MCF 10A (cell line): ENCODE measurements at regions of chr1 and their contacts with region 1.

Region 1: GRCh38 chr1:227318003-227318852 is at the start of gene CDC42BPA:
- DNase-seq: peak; percentile 96
- H3K4me3 Mint-ChIP-seq: peak within 1 kb of the TSS; percentile 86
- H3K27ac Mint-ChIP-seq: peak within 1 kb of the TSS; percentile 98
- H3K4me1 Mint-ChIP-seq: peaks cover 26% of the 10 kb centered on the region
- H3K27me3 Mint-ChIP-seq: no peaks in the 10 kb centered on the region
- CTCF ChIP-seq: no peak
- total RNA-seq, gene CDC42BPA: 88.8 and 102 TPM in 2 replicates

Region 2: DNA sequence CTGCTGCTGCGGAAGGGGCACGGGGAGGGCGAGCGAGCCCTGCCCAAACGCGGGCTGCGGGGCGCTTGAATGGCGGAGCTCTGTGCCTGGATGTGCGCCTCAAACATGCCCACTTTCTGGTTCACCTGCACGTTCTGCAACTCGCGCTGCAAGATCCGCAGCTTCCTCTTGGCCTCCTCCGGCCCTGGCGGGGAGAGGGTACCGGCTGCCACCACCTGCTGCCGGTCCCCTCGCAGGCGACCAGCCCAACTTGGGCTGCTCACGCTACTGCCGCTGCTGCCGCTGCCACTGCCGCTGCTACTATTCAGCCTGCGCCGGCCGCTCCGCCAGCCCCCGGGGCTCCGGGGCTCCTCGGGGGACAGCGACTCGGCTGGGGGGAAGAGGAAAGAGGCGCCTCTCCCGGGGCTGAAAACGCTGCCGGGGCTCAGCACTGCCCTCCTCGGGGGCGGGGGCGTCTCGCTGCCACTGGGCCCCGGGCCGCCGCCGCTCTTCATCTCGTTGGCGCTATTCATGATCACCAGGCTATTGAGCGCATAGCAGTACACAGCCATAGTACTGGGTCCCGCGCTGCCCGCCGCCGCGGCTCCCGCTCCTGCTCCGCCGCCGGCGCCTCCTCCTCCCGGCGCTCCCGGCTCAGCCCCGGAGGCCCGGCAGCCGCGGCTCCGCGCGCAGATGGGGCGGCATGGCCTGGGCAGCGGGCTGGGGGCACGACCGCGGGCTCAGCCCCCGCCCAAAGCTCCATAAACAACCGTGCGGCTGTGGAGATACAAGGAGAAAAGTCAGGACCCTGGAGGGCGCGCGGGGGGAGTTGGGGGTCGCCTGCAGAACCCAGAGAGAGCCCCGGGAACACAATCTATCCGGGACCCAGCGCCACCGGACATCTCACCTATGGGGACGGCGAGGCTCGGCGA is 581.1 kb before region 1 on chr1:
- CTCF ChIA-PET with region 1: no interaction called
- POLR2A ChIA-PET with region 1: no interaction called
- intact Hi-C with region 1: loop called (anchors 10 kb)
- DNase-seq: no peak
- H3K4me3 Mint-ChIP-seq: peak overlapping the region; percentile 82
- H3K27ac Mint-ChIP-seq: peak overlapping the region; percentile 33
- H3K4me1 Mint-ChIP-seq: peaks cover 28% of the 10 kb centered on the region
- H3K27me3 Mint-ChIP-seq: no peaks in the 10 kb centered on the region
- CTCF ChIP-seq: no peak

Region 3: DNA sequence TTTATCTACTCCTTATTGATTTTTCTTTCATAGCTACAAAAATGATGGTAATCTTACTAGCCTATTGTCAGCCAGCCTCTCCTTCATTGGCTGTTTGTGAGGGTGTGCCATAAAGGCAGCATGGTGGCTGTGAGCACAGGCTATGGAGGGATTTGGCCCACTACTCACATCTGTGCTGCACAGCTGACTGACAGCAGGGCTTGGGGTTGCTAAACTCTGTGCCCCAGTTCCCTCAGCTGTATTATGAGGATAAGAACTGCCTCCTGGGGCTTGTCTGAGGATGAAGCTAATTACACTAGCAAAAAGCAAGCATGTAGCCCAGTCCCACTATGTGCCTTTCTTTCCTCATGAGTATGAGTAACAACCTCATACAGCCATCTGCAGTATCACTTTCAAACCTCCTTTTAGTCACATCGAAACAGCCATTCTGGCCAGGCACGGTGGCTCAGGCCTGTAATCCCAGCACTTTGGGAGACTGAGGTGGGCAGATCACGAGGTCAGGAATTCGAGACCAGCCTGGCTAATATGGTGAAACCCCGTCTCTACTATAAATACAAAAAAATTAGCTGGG is 311.9 kb before region 1 on chr1:
- CTCF ChIA-PET with region 1: no interaction called
- POLR2A ChIA-PET with region 1: no interaction called
- intact Hi-C with region 1: no loop called
- DNase-seq: no peak
- H3K4me3 Mint-ChIP-seq: no peak overlapping the region
- H3K27ac Mint-ChIP-seq: no peak overlapping the region
- H3K4me1 Mint-ChIP-seq: no peaks in the 10 kb centered on the region
- H3K27me3 Mint-ChIP-seq: no peaks in the 10 kb centered on the region
- CTCF ChIP-seq: no peak

Region 4: GRCh38 chr1:227131193-227131592 is 187.0 kb before region 1 on chr1:
- CTCF ChIA-PET with region 1: no interaction called
- POLR2A ChIA-PET with region 1: no interaction called
- intact Hi-C with region 1: loop called (anchors 5 kb)
- DNase-seq: peak; percentile 66
- H3K4me3 Mint-ChIP-seq: no peak overlapping the region
- H3K27ac Mint-ChIP-seq: no peak overlapping the region
- H3K4me1 Mint-ChIP-seq: peaks cover 7% of the 10 kb centered on the region
- H3K27me3 Mint-ChIP-seq: no peaks in the 10 kb centered on the region
- CTCF ChIP-seq: peak; percentile 61

Region 5: DNA sequence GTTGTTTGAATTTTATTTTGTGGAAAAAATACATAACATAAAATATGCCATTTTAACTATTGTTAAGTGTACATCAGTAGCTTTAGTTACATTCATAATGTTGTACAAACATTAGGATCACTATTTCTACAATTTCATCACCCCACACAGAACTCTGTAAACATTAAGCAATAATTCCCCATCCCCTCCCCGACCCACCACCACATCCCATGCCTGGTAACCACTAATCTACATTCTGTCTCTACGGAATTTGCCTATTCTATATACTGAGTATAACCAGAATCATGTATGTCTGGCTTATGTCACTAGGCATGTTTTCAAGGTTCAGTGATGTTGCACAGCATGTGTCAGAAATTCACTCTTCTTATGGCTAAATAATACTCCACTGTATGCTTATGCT is 47.7 kb before region 1 on chr1:
- CTCF ChIA-PET with region 1: interaction called, 3 read pairs
- POLR2A ChIA-PET with region 1: interaction called, 12 read pairs
- intact Hi-C with region 1: no loop called
- DNase-seq: no peak
- H3K4me3 Mint-ChIP-seq: no peak overlapping the region
- H3K27ac Mint-ChIP-seq: no peak overlapping the region
- H3K4me1 Mint-ChIP-seq: peaks cover 26% of the 10 kb centered on the region
- H3K27me3 Mint-ChIP-seq: no peaks in the 10 kb centered on the region
- CTCF ChIP-seq: no peak

Region 6: DNA sequence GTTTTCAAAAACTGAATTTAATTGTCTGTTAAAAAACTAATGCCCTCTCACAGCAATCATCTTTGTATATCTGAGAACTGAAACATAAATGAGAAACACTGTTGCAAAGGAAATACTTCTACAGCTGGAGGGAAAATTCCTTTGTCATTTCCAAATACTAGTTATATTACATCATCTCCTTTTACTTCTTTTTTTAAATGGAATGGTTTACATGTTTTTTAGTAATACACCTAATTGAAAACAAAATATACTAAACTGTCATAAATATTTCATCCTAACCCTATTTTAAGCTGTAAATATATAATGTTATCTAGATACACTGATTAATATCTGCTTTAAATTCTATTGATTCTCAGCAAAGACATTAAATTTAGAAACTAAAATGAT is 19.0 kb before region 1 on chr1:
- CTCF ChIA-PET with region 1: interaction called, 4 read pairs
- POLR2A ChIA-PET with region 1: interaction called, 175 read pairs
- intact Hi-C with region 1: no loop called
- DNase-seq: peak; percentile 55
- H3K4me3 Mint-ChIP-seq: peak overlapping the region; percentile 44
- H3K27ac Mint-ChIP-seq: peak overlapping the region; percentile 70
- H3K4me1 Mint-ChIP-seq: peaks cover 36% of the 10 kb centered on the region
- H3K27me3 Mint-ChIP-seq: no peaks in the 10 kb centered on the region
- CTCF ChIP-seq: no peak

Region 7: DNA sequence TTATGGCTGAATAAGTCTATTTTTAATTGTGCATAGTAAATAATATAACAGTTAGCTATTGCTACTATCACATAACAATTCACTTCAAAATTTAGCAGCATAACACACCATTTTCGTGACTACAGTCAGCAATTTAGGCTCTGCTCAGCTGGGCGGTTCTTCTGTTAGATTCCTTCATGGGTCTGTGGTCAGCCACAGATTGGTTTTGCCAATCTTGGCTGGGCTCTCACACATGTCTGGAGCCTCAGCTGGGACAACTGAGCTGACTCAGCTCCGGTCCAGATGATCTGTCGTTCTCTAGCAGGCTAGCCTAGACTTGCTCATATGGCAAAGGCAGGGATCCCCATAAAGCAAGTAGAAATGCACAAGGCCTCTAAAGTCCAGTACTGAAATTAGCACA is 15.2 kb after region 1 on chr1:
- CTCF ChIA-PET with region 1: interaction called, 10 read pairs
- POLR2A ChIA-PET with region 1: interaction called, 16 read pairs
- intact Hi-C with region 1: no loop called
- DNase-seq: peak; percentile 89
- H3K4me3 Mint-ChIP-seq: no peak overlapping the region
- H3K27ac Mint-ChIP-seq: peak overlapping the region; percentile 77
- H3K4me1 Mint-ChIP-seq: no peaks in the 10 kb centered on the region
- H3K27me3 Mint-ChIP-seq: no peaks in the 10 kb centered on the region
- CTCF ChIP-seq: no peak

Region 8: GRCh38 chr1:227357171-227357880 is 39.1 kb after region 1 on chr1:
- CTCF ChIA-PET with region 1: no interaction called
- POLR2A ChIA-PET with region 1: interaction called, 23 read pairs
- intact Hi-C with region 1: loop called (anchors 1 kb)
- DNase-seq: peak; percentile 94
- H3K4me3 Mint-ChIP-seq: peak overlapping the region; percentile 10
- H3K27ac Mint-ChIP-seq: peak overlapping the region; percentile 62
- H3K4me1 Mint-ChIP-seq: peaks cover 18% of the 10 kb centered on the region
- H3K27me3 Mint-ChIP-seq: no peaks in the 10 kb centered on the region
- CTCF ChIP-seq: no peak